Activated CD8-positive, alpha-beta T cell treated with anti-CD3 and anti-CD28 coated beads for 36 hours (primary cell): ENCODE measurements at regions of chr11 and their contacts with region 1.

Region 1: DNA sequence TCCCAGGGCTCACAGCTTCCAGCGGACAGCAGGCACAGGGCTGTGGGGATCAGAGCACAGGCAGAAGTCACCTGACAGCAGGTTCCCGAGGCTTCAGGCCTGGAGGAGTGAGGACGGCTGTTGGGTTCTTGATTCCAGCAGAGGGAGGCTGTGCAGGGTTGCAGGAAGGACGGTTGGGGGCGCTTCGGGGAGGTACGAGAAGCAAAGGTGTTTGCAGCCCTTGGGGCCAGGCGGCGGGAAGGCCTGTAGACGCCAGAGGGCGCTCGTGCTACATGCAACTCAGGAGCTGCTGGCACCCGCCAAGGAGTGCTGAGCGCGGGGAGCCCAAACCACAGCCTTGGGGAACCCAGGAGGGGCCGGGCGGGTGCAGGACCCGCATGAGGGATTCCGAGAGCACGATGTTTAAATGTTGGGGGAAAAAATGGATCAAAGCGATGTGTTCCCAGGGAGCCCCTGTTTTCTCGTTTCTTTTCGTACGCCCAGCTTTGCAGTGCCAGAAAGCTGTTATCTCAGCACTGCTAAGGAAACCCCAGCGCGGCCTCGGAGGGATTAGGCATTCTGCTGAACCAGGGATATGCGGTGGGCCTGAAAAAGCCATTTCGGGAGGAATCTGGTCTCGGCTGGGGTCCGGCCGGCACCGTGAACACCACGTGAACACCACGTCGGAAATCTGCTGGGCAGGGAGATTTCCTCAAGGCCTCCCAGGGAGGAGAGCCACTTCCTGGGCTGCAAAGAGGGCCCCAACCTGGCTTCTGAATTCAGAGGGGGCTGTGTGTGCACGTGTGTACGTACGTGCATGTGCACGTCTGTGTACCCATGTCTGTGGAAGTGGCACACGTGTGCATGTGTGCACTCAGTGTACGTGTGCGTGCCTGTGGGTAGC is 88.1 kb downstream of the KCNQ1 start:
- DNase-seq: peak; percentile 97
- ATAC-seq: peak; percentile 84
- H3K4me3 Mint-ChIP-seq: peak overlapping the region; percentile 55
- H3K27ac Mint-ChIP-seq: no peak overlapping the region
- H3K4me1 Mint-ChIP-seq: peaks cover 19% of the 10 kb centered on the region
- H3K27me3 Mint-ChIP-seq: no peaks in the 10 kb centered on the region
- CTCF ChIP-seq: peak; percentile 96

Region 2: DNA sequence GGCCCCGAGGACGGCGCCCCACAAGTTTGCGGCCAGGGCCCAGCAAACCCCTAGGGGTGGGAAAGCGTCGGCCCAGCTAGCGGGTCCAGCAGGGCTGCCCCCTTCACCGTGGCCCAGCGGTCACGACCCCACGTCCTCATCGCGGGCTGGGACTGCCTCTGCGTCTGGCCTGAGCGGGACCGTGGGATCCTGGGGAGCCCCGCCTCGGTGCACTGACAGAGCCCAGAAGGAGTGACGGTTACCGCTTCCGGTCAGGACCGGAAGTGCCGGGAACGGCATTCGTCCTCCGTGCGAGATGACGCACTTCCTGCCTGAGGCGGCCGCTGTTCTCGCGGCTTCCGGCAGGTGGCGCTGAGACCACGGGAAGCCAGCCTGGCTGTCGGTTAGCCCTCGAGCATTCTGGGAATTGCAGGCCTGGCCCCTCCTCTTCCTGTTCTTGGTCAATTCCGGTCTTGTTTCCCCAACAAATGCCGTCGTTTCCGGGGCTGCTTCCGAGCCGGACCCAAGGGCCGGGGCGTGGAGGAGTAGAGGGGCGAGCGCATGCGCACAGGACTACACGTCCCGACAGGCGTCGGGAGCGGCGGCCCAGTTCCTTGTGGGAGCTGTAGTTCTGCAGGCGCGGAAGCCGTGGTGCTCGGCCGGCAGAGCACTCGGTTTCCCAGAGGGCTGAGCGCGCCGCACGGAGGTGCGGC is 132.7 kb before region 1 on chr11 and contains the start of gene TSSC4:
- CTCF ChIA-PET with region 1: interaction called, 17 read pairs
- POLR2A ChIA-PET with region 1: no interaction called
- intact Hi-C with region 1: no loop called
- DNase-seq: peak; percentile 99
- ATAC-seq: peak; percentile 92
- H3K4me3 Mint-ChIP-seq: peak within 1 kb of the TSS; percentile 84
- H3K27ac Mint-ChIP-seq: peak within 1 kb of the TSS; percentile 85
- H3K4me1 Mint-ChIP-seq: peaks cover 12% of the 10 kb centered on the region
- H3K27me3 Mint-ChIP-seq: no peaks in the 10 kb centered on the region
- CTCF ChIP-seq: peak; percentile 90
- total RNA-seq, gene TSSC4: 36.2 to 38.9 TPM

Region 3: DNA sequence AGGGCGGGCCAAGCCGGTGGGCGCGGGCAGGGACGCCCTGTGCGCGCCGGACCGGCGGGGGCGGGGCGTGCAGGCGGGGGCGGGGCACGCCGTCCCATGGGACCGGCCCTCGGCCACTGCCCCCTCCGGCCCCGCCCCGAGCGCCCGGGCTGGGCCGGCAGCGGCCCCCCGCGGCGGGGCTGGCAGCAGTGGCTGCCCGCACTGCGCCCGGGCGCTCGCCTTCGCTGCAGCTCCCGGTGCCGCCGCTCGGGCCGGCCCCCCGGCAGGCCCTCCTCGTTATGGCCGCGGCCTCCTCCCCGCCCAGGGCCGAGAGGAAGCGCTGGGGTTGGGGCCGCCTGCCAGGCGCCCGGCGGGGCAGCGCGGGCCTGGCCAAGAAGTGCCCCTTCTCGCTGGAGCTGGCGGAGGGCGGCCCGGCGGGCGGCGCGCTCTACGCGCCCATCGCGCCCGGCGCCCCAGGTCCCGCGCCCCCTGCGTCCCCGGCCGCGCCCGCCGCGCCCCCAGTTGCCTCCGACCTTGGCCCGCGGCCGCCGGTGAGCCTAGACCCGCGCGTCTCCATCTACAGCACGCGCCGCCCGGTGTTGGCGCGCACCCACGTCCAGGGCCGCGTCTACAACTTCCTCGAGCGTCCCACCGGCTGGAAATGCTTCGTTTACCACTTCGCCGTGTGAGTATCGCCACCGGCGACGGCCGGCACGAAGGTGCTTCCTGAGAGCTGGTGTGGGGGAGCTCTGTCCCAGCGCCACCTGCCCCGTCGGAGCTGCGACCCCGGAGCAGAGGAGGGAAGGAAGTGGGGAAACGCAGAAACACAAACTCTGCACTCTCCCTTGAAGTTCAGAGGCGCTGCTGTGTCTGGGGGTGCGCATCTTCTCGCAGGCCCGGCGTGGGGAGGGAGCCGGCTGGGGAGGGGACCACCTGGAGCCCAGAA is 87.9 kb before region 1 on chr11 and contains the start of gene KCNQ1:
- CTCF ChIA-PET with region 1: interaction called, 46 read pairs
- POLR2A ChIA-PET with region 1: no interaction called
- intact Hi-C with region 1: no loop called
- DNase-seq: peak; percentile 47
- ATAC-seq: peak; percentile 70
- H3K4me3 Mint-ChIP-seq: peak within 1 kb of the TSS; percentile 91
- H3K27ac Mint-ChIP-seq: peak within 1 kb of the TSS; percentile 73
- H3K4me1 Mint-ChIP-seq: peaks cover 32% of the 10 kb centered on the region
- H3K27me3 Mint-ChIP-seq: no peaks in the 10 kb centered on the region
- CTCF ChIP-seq: no peak
- total RNA-seq, gene KCNQ1: 8.7 to 9.5 TPM

Region 4: DNA sequence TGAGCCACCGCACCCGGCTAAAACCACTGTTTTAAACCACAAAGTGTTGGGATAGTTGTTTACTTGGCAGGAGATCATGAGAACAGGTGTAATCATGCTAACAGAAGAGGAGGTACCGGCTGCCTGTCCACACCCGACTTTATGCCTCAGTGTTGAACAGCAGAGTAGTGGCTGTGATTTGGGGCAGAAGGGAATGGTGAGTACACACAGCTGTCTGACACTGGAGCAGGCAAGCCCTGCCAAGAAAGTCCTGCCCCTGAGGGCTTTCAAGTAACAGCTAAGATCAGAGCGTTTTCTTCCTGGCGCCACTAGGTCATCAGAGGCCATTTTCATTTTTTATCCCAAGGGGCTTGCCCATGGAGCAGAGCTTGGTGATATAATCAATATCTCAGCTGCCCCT is 344.5 kb after region 1 on chr11:
- CTCF ChIA-PET with region 1: interaction called, 19 read pairs
- POLR2A ChIA-PET with region 1: no interaction called
- intact Hi-C with region 1: no loop called
- DNase-seq: no peak
- ATAC-seq: no peak
- H3K4me3 Mint-ChIP-seq: no peak overlapping the region
- H3K27ac Mint-ChIP-seq: no peak overlapping the region
- H3K4me1 Mint-ChIP-seq: no peaks in the 10 kb centered on the region
- H3K27me3 Mint-ChIP-seq: peaks cover 2% of the 10 kb centered on the region
- CTCF ChIP-seq: no peak

Region 5: DNA sequence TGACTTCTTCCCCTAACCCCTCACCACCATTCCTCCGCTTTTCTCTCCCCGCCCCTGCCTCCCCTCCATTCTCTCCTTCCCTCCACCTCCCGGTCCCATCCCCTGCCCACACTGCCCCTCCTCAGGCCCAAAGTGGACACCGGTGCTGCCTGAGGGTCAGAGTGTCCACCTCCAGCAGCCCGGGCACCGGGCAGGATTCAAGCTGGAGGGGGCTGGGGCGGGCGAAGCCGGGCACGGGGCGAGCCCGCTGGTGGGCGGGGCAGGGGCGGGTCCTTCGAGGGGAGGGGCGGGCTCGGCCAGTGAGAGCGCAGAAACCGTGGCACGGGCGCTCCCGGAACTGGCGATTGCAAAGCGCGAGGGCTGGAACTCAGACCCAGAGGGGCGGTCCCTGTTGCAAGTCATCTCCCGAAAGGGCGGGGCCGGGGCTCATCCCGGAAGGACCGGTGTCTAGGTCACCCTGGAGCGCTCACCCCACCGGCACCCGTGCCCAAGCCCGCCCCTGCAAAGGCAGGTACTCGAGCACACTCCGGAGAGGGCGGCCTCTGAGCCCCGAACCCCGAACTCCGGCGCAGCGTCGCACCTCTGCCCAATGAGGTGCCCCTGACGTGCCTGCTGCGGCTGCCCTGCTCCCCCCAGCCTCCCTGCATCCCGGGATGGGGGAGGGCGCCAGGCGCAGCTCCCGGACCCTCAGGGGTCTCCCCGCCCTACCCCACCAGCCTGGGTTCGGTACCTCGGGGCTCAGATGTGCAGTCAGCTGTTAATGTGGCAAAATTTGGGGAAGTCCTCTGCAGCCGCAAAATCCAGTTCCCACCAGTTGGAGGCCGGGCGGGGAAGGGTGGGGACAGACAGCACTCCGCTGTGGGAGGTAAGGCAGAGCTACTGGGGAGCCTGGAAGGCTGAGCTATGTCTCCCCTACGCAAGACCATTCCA is 369.2 kb after region 1 on chr11:
- CTCF ChIA-PET with region 1: interaction called, 10 read pairs
- POLR2A ChIA-PET with region 1: no interaction called
- intact Hi-C with region 1: no loop called
- DNase-seq: peak; percentile 97
- ATAC-seq: peak; percentile 93
- H3K4me3 Mint-ChIP-seq: peak overlapping the region; percentile 66
- H3K27ac Mint-ChIP-seq: no peak overlapping the region
- H3K4me1 Mint-ChIP-seq: peaks cover 29% of the 10 kb centered on the region
- H3K27me3 Mint-ChIP-seq: no peaks in the 10 kb centered on the region
- CTCF ChIP-seq: no peak

Region 6: GRCh38 chr11:3091791-3092602 is 559.1 kb after region 1 on chr11:
- CTCF ChIA-PET with region 1: interaction called, 33 read pairs
- POLR2A ChIA-PET with region 1: no interaction called
- intact Hi-C with region 1: no loop called
- DNase-seq: peak; percentile 79
- ATAC-seq: peak; percentile 96
- H3K4me3 Mint-ChIP-seq: no peak overlapping the region
- H3K27ac Mint-ChIP-seq: no peak overlapping the region
- H3K4me1 Mint-ChIP-seq: no peaks in the 10 kb centered on the region
- H3K27me3 Mint-ChIP-seq: no peaks in the 10 kb centered on the region
- CTCF ChIP-seq: peak; percentile 93